Activated CD4-positive, alpha-beta memory T cell treated with anti-CD3 and anti-CD28 coated beads, Interleukin-2, amount 10 ng/mL, durations not matched to agents 7 days and 5 days (primary cell): ENCODE measurements at regions of chr17 and their contacts with region 1.

Region 1: GRCh38 chr17:50151041-50151936 is 812 bp upstream of the PPP1R9B start:
- DNase-seq: peak; percentile 93
- H3K4me3 Mint-ChIP-seq: peak overlapping the region; percentile 83
- H3K27ac Mint-ChIP-seq: peak overlapping the region; percentile 95
- H3K4me1 Mint-ChIP-seq: peaks cover 40% of the 10 kb centered on the region
- H3K27me3 Mint-ChIP-seq: no peaks in the 10 kb centered on the region

Region 2: GRCh38 chr17:50087246-50087911 is 63.9 kb before region 1 on chr17:
- CTCF ChIA-PET with region 1: no interaction called
- POLR2A ChIA-PET with region 1: no interaction called
- DNase-seq: peak; percentile 83
- H3K4me3 Mint-ChIP-seq: no peak overlapping the region
- H3K27ac Mint-ChIP-seq: no peak overlapping the region
- H3K4me1 Mint-ChIP-seq: no peaks in the 10 kb centered on the region
- H3K27me3 Mint-ChIP-seq: no peaks in the 10 kb centered on the region

Region 3: GRCh38 chr17:50129728-50130558 is 21.3 kb before region 1 on chr17 and contains the start of gene SAMD14:
- CTCF ChIA-PET with region 1: interaction called, 3 read pairs
- POLR2A ChIA-PET with region 1: interaction called, 11 read pairs
- DNase-seq: peak; percentile 50
- H3K4me3 Mint-ChIP-seq: peak within 1 kb of the TSS; percentile 71
- H3K27ac Mint-ChIP-seq: peak within 1 kb of the TSS; percentile 45
- H3K4me1 Mint-ChIP-seq: peaks cover 38% of the 10 kb centered on the region
- H3K27me3 Mint-ChIP-seq: peaks cover 37% of the 10 kb centered on the region
- total RNA-seq, gene SAMD14: 0.68 to 1.3 TPM

Region 4: GRCh38 chr17:50139950-50140871 is 11.1 kb before region 1 on chr17:
- CTCF ChIA-PET with region 1: interaction called, 36 read pairs
- POLR2A ChIA-PET with region 1: interaction called, 29 read pairs
- DNase-seq: peak; percentile 86
- H3K4me3 Mint-ChIP-seq: peak overlapping the region; percentile 69
- H3K27ac Mint-ChIP-seq: peak overlapping the region; percentile 95
- H3K4me1 Mint-ChIP-seq: peaks cover 71% of the 10 kb centered on the region
- H3K27me3 Mint-ChIP-seq: no peaks in the 10 kb centered on the region

Region 5: GRCh38 chr17:50258647-50259476 is 107.6 kb after region 1 on chr17:
- CTCF ChIA-PET with region 1: no interaction called
- POLR2A ChIA-PET with region 1: no interaction called
- DNase-seq: no peak
- H3K4me3 Mint-ChIP-seq: no peak overlapping the region
- H3K27ac Mint-ChIP-seq: no peak overlapping the region
- H3K4me1 Mint-ChIP-seq: no peaks in the 10 kb centered on the region
- H3K27me3 Mint-ChIP-seq: peaks cover 6% of the 10 kb centered on the region